Activated T-helper 1 cell treated with anti-CD3 and anti-CD28 coated beads, Interleukin-12 subunit alpha, Interleukin-12 subunit beta, Interleukin-2, Interleukin-4 antibody, amounts not matched to agents 30 ng/mL and 10 ng/mL and 1 ng/mL, durations not matched to agents 14 hours and 24 hours and 36 hours (primary cell): ENCODE measurements at regions of chr9 and their contacts with region 1.

Region 1: GRCh38 chr9:21812946-21813568 is 10.6 kb downstream of the MTAP start:
- DNase-seq: peak; percentile 47
- H3K4me3 Mint-ChIP-seq: no peak overlapping the region
- H3K27ac Mint-ChIP-seq: peak overlapping the region; percentile 5
- H3K4me1 Mint-ChIP-seq: peaks cover 28% of the 10 kb centered on the region
- H3K27me3 Mint-ChIP-seq: no peaks in the 10 kb centered on the region

Region 2: GRCh38 chr9:21831961-21832509 is 19.0 kb after region 1 on chr9:
- intact Hi-C with region 1: loop called (anchors 2 kb)
- DNase-seq: peak; percentile 66
- H3K4me3 Mint-ChIP-seq: peak overlapping the region; percentile 20
- H3K27ac Mint-ChIP-seq: peak overlapping the region; percentile 73
- H3K4me1 Mint-ChIP-seq: peaks cover 73% of the 10 kb centered on the region
- H3K27me3 Mint-ChIP-seq: no peaks in the 10 kb centered on the region

Region 3: DNA sequence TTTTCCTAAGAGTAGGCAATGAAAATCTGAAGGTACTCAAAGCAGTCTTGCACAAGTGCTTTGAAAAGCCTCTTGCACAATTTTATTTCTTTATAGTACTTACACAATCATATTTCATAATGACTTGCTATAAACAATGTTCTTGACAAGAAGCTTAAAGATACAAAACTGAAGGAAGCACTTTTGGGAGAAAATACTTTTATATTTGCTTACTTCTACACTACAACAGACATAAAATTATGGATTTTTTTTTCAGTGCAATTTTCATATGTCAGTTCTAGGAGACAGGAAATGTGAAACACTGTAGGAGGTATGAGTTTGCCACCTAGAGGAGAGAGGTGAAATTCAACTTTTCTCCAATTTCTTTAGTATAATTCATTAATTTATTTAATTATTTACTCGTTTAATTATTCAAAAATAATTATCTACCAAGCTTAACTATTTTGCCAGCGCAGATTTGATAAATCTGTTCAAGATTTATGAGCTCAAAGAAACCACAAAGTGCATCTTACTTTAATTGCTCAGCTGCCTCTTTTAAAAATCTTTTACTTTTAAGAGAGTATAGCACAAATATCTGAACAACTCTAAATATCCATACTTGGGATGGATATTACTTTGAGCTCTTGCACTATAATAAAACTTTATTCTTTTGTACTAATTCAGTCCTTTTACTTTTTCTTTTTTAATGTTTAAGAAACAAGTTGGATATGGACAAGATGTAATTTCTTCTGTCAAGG is 225.1 kb after region 1 on chr9:
- intact Hi-C with region 1: loop called (anchors 1 kb)
- DNase-seq: no peak
- H3K4me3 Mint-ChIP-seq: no peak overlapping the region
- H3K27ac Mint-ChIP-seq: no peak overlapping the region
- H3K4me1 Mint-ChIP-seq: peaks cover 41% of the 10 kb centered on the region
- H3K27me3 Mint-ChIP-seq: peaks cover 30% of the 10 kb centered on the region

Region 4: GRCh38 chr9:22238809-22239684 is 426.0 kb after region 1 on chr9:
- intact Hi-C with region 1: loop called (anchors 1 kb)
- DNase-seq: no peak
- H3K4me3 Mint-ChIP-seq: no peak overlapping the region
- H3K27ac Mint-ChIP-seq: no peak overlapping the region
- H3K4me1 Mint-ChIP-seq: peaks cover 50% of the 10 kb centered on the region
- H3K27me3 Mint-ChIP-seq: peaks cover 43% of the 10 kb centered on the region

Region 5: GRCh38 chr9:22452415-22453010 is 639.5 kb after region 1 on chr9:
- intact Hi-C with region 1: loop called (anchors 1 kb)
- DNase-seq: no peak
- H3K4me3 Mint-ChIP-seq: no peak overlapping the region
- H3K27ac Mint-ChIP-seq: no peak overlapping the region
- H3K4me1 Mint-ChIP-seq: no peaks in the 10 kb centered on the region
- H3K27me3 Mint-ChIP-seq: peaks cover 24% of the 10 kb centered on the region